ENCODE measurements at regions of chr12 and their contacts with region 1.

Region 1: DNA sequence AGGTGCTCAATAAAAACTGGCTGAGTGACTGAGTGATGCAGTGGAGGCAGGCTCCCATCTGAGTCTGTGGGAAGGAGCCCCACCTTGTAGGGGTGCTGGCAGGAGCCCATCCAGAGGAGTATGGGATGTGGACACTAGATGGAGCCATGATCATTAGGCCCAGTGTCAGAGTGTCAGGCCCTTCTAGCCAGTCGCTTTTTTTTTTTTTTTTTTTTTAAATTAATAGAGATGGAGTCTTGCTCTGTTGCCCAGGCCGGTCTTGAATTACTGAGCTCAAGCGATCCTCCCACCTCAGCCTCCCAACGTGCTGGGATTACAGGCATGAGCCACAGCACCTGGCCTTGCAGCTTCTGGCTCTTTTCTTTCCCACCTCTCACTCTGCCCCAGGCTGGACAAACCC is 11.5 kb downstream of the RITA1 start:
- DNase-seq: peak in 2 of 3 donors; percentile 52 to 74
- ATAC-seq: peak; percentile 82 to 94 (median 92)
- H3K4me3 ChIP-seq: no peak overlapping the region
- H3K27ac ChIP-seq: no peak overlapping the region
- H3K4me1 ChIP-seq: peaks cover 0 to 11% (median 0%) of the 10 kb centered on the region in 4 donors
- H3K27me3 ChIP-seq: no peaks in the 10 kb centered on the region
- CTCF ChIP-seq: peak; percentile 49 to 82 (median 79)
- POLR2A ChIP-seq: no peak

Region 2: DNA sequence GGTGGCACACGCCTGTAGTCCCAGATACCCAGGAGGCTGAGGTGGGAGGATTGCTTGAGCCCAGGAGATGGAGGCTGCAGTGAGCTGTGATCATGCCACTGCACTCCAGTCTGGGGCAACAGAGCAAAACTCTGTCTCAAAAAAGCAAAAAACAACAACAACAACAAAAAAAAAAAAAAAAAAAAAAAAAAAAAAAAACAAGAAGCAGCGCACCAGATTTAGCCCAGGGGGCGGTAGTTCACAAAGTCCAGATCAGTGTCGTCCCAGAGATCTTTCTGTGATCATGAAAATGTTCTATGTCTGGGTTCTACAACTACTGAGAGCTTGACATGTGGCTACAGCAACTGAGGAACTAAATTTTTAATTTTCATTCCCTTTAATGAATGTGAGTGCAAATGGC is 191.2 kb before region 1 on chr12:
- intact Hi-C with region 1: no loop called
- DNase-seq: no peak
- ATAC-seq: no peak
- H3K4me3 ChIP-seq: no peak overlapping the region
- H3K27ac ChIP-seq: no peak overlapping the region
- H3K4me1 ChIP-seq: peaks cover 0 to 4% (median 2%) of the 10 kb centered on the region in 4 donors
- H3K27me3 ChIP-seq: no peaks in the 10 kb centered on the region
- CTCF ChIP-seq: peak in 3 of 4 donors; percentile 5 to 8 (median 5)
- POLR2A ChIP-seq: no peak

Region 3: DNA sequence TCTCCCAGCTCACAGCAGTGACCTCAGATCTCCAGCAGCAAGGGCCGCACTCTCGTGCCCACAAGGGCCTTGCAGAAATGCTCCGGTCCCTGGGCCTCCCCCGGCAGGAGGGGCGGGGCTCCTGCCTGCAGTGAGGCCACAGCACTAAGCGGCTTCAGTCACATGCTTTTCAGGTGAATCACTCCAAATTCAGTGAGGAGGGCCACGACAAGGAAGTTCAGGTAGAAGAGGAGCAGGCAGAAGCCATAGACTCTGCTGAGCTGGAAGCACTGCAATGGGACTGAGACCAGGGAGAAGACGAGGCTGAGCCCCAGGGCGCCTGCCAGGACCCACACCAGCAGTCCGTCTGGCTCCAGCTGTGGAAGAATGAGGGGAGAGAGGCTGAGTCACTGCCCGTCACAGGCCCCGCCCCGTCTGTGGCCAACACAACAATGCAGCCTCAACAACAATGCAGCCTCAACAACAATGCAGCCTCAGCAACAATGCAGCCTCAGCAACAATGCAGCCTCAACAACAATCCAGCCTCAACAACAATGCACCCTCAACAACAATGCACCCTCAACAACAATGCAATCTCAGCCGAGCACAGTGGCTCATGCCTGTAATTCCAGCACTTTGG is 102.7 kb after region 1 on chr12:
- intact Hi-C with region 1: loop called in 1 of 2 experiments (anchors 10 kb)
- DNase-seq: no peak
- ATAC-seq: peak in 1 of 4 donors; percentile 46
- H3K4me3 ChIP-seq: no peak overlapping the region
- H3K27ac ChIP-seq: no peak overlapping the region
- H3K4me1 ChIP-seq: peaks cover 0 to 26% (median 12%) of the 10 kb centered on the region in 4 donors
- H3K27me3 ChIP-seq: no peaks in the 10 kb centered on the region
- CTCF ChIP-seq: no peak
- POLR2A ChIP-seq: no peak

Region 4: GRCh38 chr12:113439606-113440030 is 242.6 kb after region 1 on chr12:
- intact Hi-C with region 1: loop called in 1 of 2 experiments (anchors 10 kb)
- DNase-seq: no peak
- ATAC-seq: peak; percentile 54 to 69 (median 62)
- H3K4me3 ChIP-seq: no peak overlapping the region
- H3K27ac ChIP-seq: no peak overlapping the region
- H3K4me1 ChIP-seq: no peaks in the 10 kb centered on the region
- H3K27me3 ChIP-seq: no peaks in the 10 kb centered on the region
- CTCF ChIP-seq: peak; percentile 37 to 56 (median 55)
- POLR2A ChIP-seq: no peak